Common myeloid progenitor, CD34-positive (primary cell): ENCODE measurements at regions of chr3 and their contacts with region 1.

Region 1: GRCh38 chr3:102229062-102229655 is 205.7 kb upstream of the ZPLD1 start:
- DNase-seq: peak; percentile 80 to 92 (median 89)
- H3K4me3 ChIP-seq: no peak overlapping the region
- H3K27ac ChIP-seq: no peak overlapping the region
- H3K4me1 ChIP-seq: peaks cover 3 to 25% (median 15%) of the 10 kb centered on the region in 4 experiments
- H3K27me3 ChIP-seq: no peaks in the 10 kb centered on the region

Region 2: GRCh38 chr3:101803173-101803782 is 425.9 kb before region 1 on chr3:
- CTCF ChIA-PET with region 1: interaction called, 414 read pairs
- POLR2A ChIA-PET with region 1: no interaction called
- DNase-seq: peak; percentile 80 to 95 (median 91)
- H3K4me3 ChIP-seq: peak overlapping the region in 1 of 7 experiments; percentile 51
- H3K27ac ChIP-seq: no peak overlapping the region
- H3K4me1 ChIP-seq: peaks cover 0 to 4% (median 0%) of the 10 kb centered on the region in 4 experiments
- H3K27me3 ChIP-seq: no peaks in the 10 kb centered on the region

Region 3: GRCh38 chr3:101849051-101849720 is 380.0 kb before region 1 on chr3 and contains the start of gene NFKBIZ:
- CTCF ChIA-PET with region 1: interaction called, 15 read pairs
- POLR2A ChIA-PET with region 1: interaction called, 9 read pairs
- DNase-seq: peak; percentile 91 to 97 (median 97)
- H3K4me3 ChIP-seq: peak within 1 kb of the TSS; percentile 89 to 100 (median 94)
- H3K27ac ChIP-seq: peak within 1 kb of the TSS; percentile 94 to 97
- H3K4me1 ChIP-seq: peaks cover 14 to 41% (median 24%) of the 10 kb centered on the region in 4 experiments
- H3K27me3 ChIP-seq: no peaks in the 10 kb centered on the region

Region 4: DNA sequence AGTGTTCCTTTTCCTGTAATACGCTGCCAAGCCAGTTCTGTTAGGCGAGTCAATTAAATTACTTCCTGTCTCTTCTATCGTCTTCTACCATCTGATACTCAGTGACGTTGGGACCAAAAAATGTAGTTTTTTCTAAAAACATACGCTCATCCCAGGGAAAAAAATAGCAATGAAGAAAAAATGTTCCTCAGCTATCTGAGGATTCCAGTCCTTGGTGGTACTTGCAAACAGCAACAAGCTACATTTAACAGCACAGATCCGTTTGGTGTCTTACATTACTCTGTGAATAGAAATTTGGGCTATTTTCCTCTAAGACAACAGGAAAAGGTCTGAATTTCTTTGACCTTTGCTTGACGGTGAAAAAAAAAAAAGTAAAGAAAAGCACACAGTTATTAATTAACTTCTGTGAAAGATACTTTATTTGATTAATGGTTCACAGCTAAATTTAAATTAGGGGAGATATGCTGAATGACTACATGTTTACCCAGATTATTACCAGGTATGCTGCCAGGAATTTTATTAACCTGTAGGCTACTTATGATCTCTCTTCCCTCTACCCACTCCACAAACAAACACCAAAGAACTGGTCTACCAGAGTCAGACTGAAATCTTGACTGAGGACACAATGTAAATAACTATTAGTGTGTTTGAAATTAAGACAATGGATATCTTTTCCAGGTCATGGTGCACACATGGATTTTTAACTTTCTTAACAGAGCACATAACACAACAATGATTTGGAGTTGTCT is 48.7 kb before region 1 on chr3:
- CTCF ChIA-PET with region 1: interaction called, 13 read pairs
- POLR2A ChIA-PET with region 1: no interaction called
- DNase-seq: peak; percentile 82 to 88 (median 83)
- H3K4me3 ChIP-seq: peak overlapping the region in 5 of 7 experiments; percentile 21 to 65 (median 49)
- H3K27ac ChIP-seq: peak overlapping the region; percentile 70 to 82
- H3K4me1 ChIP-seq: peaks cover 20 to 60% (median 37%) of the 10 kb centered on the region in 4 experiments
- H3K27me3 ChIP-seq: no peaks in the 10 kb centered on the region

Region 5: GRCh38 chr3:102307429-102307828 is 78.3 kb after region 1 on chr3:
- CTCF ChIA-PET with region 1: no interaction called
- POLR2A ChIA-PET with region 1: no interaction called
- DNase-seq: no peak
- H3K4me3 ChIP-seq: no peak overlapping the region
- H3K27ac ChIP-seq: no peak overlapping the region
- H3K4me1 ChIP-seq: no peaks in the 10 kb centered on the region
- H3K27me3 ChIP-seq: no peaks in the 10 kb centered on the region

Region 6: GRCh38 chr3:102529452-102529851 is 300.3 kb after region 1 on chr3:
- CTCF ChIA-PET with region 1: interaction called, 144 read pairs
- POLR2A ChIA-PET with region 1: no interaction called
- DNase-seq: no peak
- H3K4me3 ChIP-seq: no peak overlapping the region
- H3K27ac ChIP-seq: no peak overlapping the region
- H3K4me1 ChIP-seq: peaks cover 0 to 8% (median 1%) of the 10 kb centered on the region in 4 experiments
- H3K27me3 ChIP-seq: no peaks in the 10 kb centered on the region